GM13976 (cell line): ENCODE measurements at regions of chr1 and their contacts with region 1.

Region 1: DNA sequence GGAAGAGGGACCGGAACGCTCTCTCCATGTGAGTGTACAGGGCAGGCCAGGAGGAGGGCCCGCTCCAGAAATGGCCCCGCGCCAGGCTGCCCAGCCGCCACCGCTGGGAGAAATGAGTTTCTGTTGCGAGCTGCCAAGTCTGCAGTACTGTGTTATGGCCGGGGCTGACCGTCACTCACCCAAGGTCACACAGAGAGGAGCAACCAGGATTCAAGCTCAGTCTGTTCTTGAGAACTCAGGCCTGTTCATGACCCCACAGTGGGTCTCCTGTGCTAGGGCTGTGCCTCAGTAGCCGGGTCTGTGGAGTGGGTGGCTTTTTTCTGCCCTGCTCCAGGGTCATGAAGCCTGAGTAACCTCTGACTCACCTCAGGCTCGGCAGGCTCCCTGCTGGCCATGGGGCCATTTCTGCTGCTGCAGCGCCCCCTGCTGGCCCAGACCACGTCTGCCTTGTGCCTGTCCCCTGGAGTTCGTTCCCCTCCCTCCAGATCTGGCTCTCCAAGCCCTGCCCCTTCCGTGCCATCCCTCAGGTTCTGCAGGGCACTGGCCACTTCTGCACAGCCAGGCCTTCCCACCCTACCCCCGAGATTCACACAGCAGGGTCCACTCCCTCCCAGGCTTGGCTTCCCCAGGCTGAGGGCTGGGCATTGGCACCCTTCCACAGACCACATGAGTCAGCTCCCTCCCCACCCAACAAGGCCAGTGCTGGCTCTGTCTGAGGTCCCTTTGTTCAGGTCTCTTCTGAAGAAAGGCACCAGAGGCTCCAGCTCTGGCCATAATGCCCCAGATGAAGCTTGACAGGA is 51.8 kb downstream of the EDN2 start:
- DNase-seq: peak; percentile 92
- CTCF ChIP-seq: peak; percentile 85

Region 2: DNA sequence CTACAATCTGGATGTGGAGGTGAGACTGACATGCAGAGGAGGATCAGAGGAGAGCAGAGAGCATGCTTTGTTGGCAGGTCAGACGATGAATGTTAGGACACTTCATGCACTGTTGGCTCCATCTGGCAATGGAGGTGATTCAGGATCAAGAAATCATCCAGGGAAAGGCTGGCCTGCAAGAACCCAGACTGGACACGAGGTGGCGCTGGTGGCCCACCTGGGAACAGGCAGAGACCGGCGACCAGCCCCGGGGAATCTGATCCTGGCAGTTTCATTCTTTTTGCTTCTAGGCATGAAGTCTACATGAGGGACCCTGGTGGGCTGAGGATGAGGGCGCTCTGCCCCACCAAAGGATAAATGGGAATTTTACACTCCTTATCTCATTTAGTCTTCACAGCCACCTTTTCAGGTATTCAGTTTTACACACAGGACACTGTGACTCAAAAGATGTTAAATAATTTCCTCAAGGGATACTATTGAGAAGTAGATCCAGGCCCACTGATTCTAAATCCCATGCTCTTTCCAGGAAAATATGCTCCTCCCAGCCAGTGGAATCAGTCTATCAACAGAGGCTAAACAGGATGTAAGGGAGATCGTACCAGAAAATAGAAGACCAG is 164.4 kb before region 1 on chr1:
- in situ Hi-C with region 1: loop called (anchors 10 kb)
- DNase-seq: peak; percentile 83
- CTCF ChIP-seq: peak; percentile 93

Region 3: DNA sequence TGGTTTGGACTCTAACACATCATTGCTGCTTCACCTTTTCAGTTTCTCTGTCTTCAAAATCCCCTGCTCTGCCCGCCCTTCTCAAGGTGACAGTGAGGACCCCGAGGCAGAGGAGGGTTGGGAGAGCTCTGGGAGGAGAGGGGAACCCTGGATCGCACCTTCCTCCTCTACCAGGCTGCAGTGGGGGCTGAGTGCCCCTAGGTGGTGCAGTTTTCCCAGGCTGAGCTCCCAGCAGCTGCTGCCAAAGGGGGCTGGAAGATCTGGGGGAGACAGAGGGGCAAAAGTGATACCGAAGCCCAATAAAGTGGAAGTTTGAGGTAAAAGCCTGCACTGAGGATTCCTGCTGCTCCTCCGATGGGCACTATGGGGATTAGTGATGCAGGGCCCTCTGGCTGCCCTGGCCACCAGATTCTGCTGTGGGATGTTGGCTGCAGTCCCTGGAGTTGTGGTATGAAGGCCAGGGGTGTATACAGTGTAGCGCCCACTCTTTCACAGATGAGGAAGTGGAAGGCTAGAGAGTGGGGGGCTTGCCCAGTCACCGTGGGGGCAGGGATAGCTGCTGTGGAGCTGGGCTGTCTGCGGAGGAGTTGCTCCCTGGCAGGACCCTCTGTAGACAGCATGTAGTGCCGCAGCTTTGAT is 149.9 kb before region 1 on chr1:
- in situ Hi-C with region 1: no loop called
- DNase-seq: peak; percentile 70
- CTCF ChIP-seq: peak; percentile 81

Region 4: GRCh38 chr1:41313661-41314131 is 119.0 kb before region 1 on chr1:
- in situ Hi-C with region 1: loop called (anchors 10 kb)
- DNase-seq: no peak
- CTCF ChIP-seq: peak; percentile 46

Region 5: DNA sequence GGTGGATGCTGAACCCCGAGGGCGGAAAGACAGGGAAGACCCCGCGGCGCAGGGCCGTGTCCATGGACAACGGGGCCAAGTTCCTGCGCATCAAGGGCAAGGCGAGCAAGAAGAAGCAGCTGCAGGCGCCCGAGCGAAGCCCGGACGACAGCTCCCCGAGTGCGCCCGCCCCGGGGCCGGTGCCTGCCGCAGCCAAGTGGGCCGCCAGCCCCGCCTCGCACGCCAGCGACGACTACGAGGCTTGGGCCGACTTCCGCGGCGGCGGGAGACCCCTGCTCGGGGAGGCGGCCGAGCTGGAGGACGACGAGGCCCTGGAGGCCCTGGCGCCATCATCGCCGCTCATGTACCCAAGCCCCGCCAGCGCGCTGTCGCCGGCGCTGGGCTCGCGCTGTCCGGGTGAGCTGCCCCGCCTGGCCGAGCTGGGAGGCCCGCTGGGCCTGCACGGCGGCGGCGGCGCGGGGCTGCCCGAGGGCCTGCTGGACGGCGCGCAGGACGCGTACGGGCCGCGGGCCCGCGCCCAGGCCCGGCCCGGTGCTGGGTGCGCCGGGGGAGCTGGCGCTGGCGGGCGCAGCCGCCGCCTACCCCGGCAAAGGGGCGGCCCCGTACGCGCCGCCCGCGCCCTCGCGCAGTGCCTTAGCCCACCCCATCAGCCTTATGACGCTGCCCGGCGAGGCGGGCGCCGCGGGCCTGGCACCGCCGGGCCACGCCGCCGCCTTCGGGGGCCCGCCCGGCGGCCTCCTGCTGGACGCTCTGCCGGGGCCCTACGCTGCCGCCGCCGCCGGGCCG is 50.8 kb before region 1 on chr1:
- in situ Hi-C with region 1: no loop called
- DNase-seq: peak; percentile 49
- CTCF ChIP-seq: no peak

Region 6: DNA sequence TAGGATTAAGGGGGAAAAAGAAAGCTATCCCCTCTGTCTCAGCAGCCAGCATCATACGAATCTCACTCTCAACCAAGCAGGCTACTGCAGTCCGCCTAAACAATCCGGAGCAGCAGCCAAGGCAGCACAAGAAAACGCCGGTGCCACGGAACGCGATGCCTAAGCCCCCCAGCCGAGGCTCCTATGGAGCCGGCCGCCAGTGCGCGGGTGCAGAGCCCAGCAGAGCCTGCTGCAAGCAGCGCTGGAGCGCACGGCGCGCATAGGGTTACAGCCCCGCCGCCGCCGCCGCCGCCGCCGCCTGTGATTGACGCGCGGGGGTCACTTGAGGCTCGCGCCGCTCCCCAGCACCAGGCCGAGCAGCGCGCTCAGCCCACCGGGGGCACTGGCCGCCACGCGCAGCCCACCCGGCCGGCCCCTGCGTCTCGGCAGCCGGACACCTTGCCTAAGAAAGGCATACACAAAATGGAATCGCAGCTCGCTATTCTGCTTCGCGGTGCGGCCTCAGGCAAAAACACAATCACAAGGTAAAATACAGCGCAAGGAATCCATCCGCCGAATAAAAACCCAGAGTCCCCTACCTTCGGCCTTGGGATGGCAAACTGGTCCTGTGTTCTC is 485.3 kb after region 1 on chr1:
- in situ Hi-C with region 1: no loop called
- DNase-seq: peak; percentile 53
- CTCF ChIP-seq: no peak